ENCODE measurements at regions of chr9 and their contacts with region 1.

Region 1: GRCh38 chr9:95875305-95876137 is at the start of gene ERCC6L2:
- DNase-seq: peak; percentile 87 to 94 (median 90)
- ATAC-seq: peak; percentile 93
- H3K4me3 ChIP-seq: no peak within 1 kb of the TSS
- H3K4me3 Mint-ChIP-seq: no peak within 1 kb of the TSS
- H3K27ac ChIP-seq: no peak within 1 kb of the TSS
- H3K27ac Mint-ChIP-seq: no peak within 1 kb of the TSS
- H3K4me1 ChIP-seq: peaks cover 8 to 20% of the 10 kb centered on the region in 2 donors
- H3K4me1 Mint-ChIP-seq: peaks cover 17 to 44% (median 35%) of the 10 kb centered on the region in 7 donors
- H3K27me3 ChIP-seq: no peaks in the 10 kb centered on the region
- H3K27me3 Mint-ChIP-seq: no peaks in the 10 kb centered on the region
- total RNA-seq, gene ERCC6L2: 46.2 to 82.8 (median 52.4) TPM

Region 2: GRCh38 chr9:94166237-94166963 is 1709.1 kb before region 1 on chr9:
- CTCF ChIA-PET with region 1: no interaction called
- POLR2A ChIA-PET with region 1: no interaction called
- intact Hi-C with region 1: loop called (anchors 5 kb)
- DNase-seq: peak; percentile 81 to 96 (median 92)
- ATAC-seq: peak; percentile 72
- H3K4me3 ChIP-seq: peak overlapping the region; percentile 82
- H3K4me3 Mint-ChIP-seq: peak overlapping the region; percentile 84 to 96 (median 88)
- H3K27ac ChIP-seq: peak overlapping the region; percentile 100
- H3K27ac Mint-ChIP-seq: peak overlapping the region; percentile 79 to 97 (median 91)
- H3K4me1 ChIP-seq: peaks cover 37 to 38% of the 10 kb centered on the region in 2 donors
- H3K4me1 Mint-ChIP-seq: peaks cover 33 to 61% (median 58%) of the 10 kb centered on the region in 7 donors
- H3K27me3 ChIP-seq: no peaks in the 10 kb centered on the region
- H3K27me3 Mint-ChIP-seq: no peaks in the 10 kb centered on the region

Region 3: GRCh38 chr9:95494416-95495371 is 380.8 kb before region 1 on chr9:
- CTCF ChIA-PET with region 1: no interaction called
- POLR2A ChIA-PET with region 1: no interaction called
- intact Hi-C with region 1: loop called in 1 of 2 experiments (anchors 5 kb)
- DNase-seq: peak; percentile 58 to 93 (median 90)
- ATAC-seq: peak; percentile 97
- H3K4me3 ChIP-seq: peak overlapping the region; percentile 67
- H3K4me3 Mint-ChIP-seq: peak overlapping the region; percentile 75 to 94 (median 89)
- H3K27ac ChIP-seq: peak overlapping the region; percentile 63
- H3K27ac Mint-ChIP-seq: peak overlapping the region; percentile 80 to 99 (median 94)
- H3K4me1 ChIP-seq: peaks cover 56 to 59% of the 10 kb centered on the region in 2 donors
- H3K4me1 Mint-ChIP-seq: peaks cover 34 to 81% (median 70%) of the 10 kb centered on the region in 7 donors
- H3K27me3 ChIP-seq: no peaks in the 10 kb centered on the region
- H3K27me3 Mint-ChIP-seq: peaks cover 0 to 42% (median 0%) of the 10 kb centered on the region in 5 donors

Region 4: GRCh38 chr9:95696701-95697100 is 178.8 kb before region 1 on chr9:
- CTCF ChIA-PET with region 1: no interaction called
- POLR2A ChIA-PET with region 1: no interaction called
- intact Hi-C with region 1: no loop called
- DNase-seq: no peak
- ATAC-seq: no peak
- H3K4me3 ChIP-seq: no peak overlapping the region
- H3K4me3 Mint-ChIP-seq: no peak overlapping the region
- H3K27ac ChIP-seq: no peak overlapping the region
- H3K27ac Mint-ChIP-seq: no peak overlapping the region
- H3K4me1 ChIP-seq: no peaks in the 10 kb centered on the region
- H3K4me1 Mint-ChIP-seq: peaks cover 0 to 2% (median 0%) of the 10 kb centered on the region in 7 donors
- H3K27me3 ChIP-seq: no peaks in the 10 kb centered on the region
- H3K27me3 Mint-ChIP-seq: peaks cover 0 to 13% (median 4%) of the 10 kb centered on the region in 5 donors

Region 5: DNA sequence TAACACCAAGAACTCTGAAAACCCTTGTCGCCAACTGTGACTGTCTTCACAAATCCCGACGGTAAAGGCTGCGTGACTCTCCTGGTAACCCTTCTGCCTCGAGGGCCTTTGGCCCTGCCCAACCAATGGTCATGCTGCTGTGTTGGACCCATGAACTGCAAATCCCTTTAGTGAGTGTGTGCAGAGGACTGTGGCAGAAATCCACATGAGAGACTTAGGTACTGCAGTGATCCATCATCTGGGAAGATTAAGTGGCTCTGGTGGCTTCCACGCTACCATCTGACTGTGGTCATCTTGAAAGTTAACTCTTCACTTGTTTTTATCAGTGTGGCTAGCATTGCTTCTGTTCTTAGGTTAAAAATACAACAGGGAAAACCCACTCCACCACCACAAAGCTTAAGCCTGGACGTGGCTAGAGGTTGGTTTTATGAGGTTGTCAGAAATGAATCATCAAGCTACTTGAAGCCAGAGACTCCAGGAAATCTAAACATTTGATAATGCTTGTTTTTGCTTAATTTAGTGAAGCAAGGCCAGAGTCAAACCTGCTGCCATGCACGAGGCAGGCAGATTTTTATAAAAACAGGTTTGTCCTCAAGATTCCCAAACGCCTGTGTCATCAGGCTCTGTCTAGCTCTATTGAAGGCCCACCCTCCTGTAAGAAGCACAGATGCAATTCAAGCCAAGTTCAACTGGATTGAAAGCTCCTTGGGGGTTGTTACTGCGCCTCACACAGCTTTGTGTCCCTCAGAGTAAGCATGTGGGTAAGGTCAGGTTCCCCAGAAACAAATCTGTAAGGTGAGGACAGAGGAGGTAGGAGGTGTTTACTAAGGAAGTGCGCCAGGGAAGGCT is 52.7 kb before region 1 on chr9:
- CTCF ChIA-PET with region 1: no interaction called
- POLR2A ChIA-PET with region 1: no interaction called
- intact Hi-C with region 1: loop called in 1 of 2 experiments (anchors 2 kb)
- DNase-seq: peak in 1 of 9 donors; percentile 45
- ATAC-seq: no peak
- H3K4me3 ChIP-seq: no peak overlapping the region
- H3K4me3 Mint-ChIP-seq: peak overlapping the region in 1 of 10 donors; percentile 65
- H3K27ac ChIP-seq: no peak overlapping the region
- H3K27ac Mint-ChIP-seq: peak overlapping the region in 2 of 9 donors; percentile 6 to 70
- H3K4me1 ChIP-seq: no peaks in the 10 kb centered on the region
- H3K4me1 Mint-ChIP-seq: peaks cover 0 to 41% (median 4%) of the 10 kb centered on the region in 7 donors
- H3K27me3 ChIP-seq: no peaks in the 10 kb centered on the region
- H3K27me3 Mint-ChIP-seq: peaks cover 0 to 47% (median 0%) of the 10 kb centered on the region in 5 donors

Region 6: GRCh38 chr9:95901506-95901905 is 26.0 kb after region 1 on chr9:
- CTCF ChIA-PET with region 1: interaction called, 4 read pairs
- POLR2A ChIA-PET with region 1: interaction called, 10 read pairs
- intact Hi-C with region 1: loop called (anchors 1 to 2 kb)
- DNase-seq: no peak
- ATAC-seq: no peak
- H3K4me3 ChIP-seq: no peak overlapping the region
- H3K4me3 Mint-ChIP-seq: peak overlapping the region in 1 of 10 donors; percentile 16
- H3K27ac ChIP-seq: no peak overlapping the region
- H3K27ac Mint-ChIP-seq: no peak overlapping the region
- H3K4me1 ChIP-seq: peaks cover 0 to 5% of the 10 kb centered on the region in 2 donors
- H3K4me1 Mint-ChIP-seq: peaks cover 20 to 68% (median 42%) of the 10 kb centered on the region in 7 donors
- H3K27me3 ChIP-seq: no peaks in the 10 kb centered on the region
- H3K27me3 Mint-ChIP-seq: no peaks in the 10 kb centered on the region

Region 7: GRCh38 chr9:96020792-96021550 is 145.4 kb after region 1 on chr9:
- CTCF ChIA-PET with region 1: no interaction called
- POLR2A ChIA-PET with region 1: no interaction called
- intact Hi-C with region 1: loop called (anchors 1 kb)
- DNase-seq: peak in 8 of 9 donors; percentile 35 to 70 (median 44)
- ATAC-seq: peak; percentile 70
- H3K4me3 ChIP-seq: peak overlapping the region; percentile 61
- H3K4me3 Mint-ChIP-seq: peak overlapping the region; percentile 71 to 91 (median 86)
- H3K27ac ChIP-seq: peak overlapping the region; percentile 72
- H3K27ac Mint-ChIP-seq: peak overlapping the region; percentile 28 to 97 (median 70)
- H3K4me1 ChIP-seq: peaks cover 27 to 34% of the 10 kb centered on the region in 2 donors
- H3K4me1 Mint-ChIP-seq: peaks cover 47 to 74% (median 63%) of the 10 kb centered on the region in 7 donors
- H3K27me3 ChIP-seq: no peaks in the 10 kb centered on the region
- H3K27me3 Mint-ChIP-seq: peaks cover 0 to 31% (median 5%) of the 10 kb centered on the region in 5 donors

Region 8: DNA sequence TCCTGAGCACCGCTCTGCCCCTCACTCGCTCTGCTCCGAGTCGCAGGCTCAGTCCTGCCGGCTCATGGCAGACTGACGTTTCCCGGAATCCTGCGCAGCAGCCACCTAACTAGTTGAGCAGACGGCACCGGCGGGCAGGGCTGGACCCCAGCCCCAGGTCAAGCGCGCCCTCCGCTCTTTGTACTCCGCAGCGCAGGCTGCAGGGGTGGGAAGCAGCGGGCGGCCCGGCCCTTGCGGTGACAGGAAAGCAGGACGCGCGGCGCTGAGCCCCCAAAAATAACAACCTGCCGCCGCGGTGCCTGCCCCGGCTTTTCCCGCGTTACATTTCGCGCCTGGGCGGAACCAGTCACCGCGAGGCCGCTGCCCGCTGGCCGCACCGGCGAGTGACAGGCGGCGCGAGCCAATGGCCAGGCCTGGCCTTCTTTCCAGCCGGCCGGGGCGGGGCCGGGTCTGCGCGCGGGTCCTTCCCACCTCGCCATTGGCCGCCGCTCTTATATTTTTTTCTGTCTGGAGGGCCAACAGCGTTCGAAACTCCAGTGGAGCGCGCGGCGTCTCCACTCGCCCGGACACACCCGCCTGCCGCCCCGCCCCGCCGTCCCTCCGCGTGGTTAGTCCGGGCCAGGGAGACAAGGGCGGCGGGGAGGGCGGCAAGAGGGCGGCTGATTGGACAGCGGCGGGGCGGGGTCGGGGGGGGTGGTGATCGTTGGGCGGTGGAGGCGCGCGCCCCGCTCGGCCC is 542.7 kb after region 1 on chr9 and contains the start of gene ZNF367:
- CTCF ChIA-PET with region 1: no interaction called
- POLR2A ChIA-PET with region 1: no interaction called
- intact Hi-C with region 1: loop called in 1 of 2 experiments (anchors 1 kb)
- DNase-seq: peak; percentile 75 to 94 (median 82)
- ATAC-seq: peak; percentile 85
- H3K4me3 ChIP-seq: peak within 1 kb of the TSS; percentile 94
- H3K4me3 Mint-ChIP-seq: peak within 1 kb of the TSS; percentile 88 to 98 (median 92)
- H3K27ac ChIP-seq: peak within 1 kb of the TSS; percentile 98
- H3K27ac Mint-ChIP-seq: peak within 1 kb of the TSS; percentile 92 to 98 (median 96)
- H3K4me1 ChIP-seq: peaks cover 19 to 31% of the 10 kb centered on the region in 2 donors
- H3K4me1 Mint-ChIP-seq: peaks cover 21 to 39% (median 31%) of the 10 kb centered on the region in 7 donors
- H3K27me3 ChIP-seq: no peaks in the 10 kb centered on the region
- H3K27me3 Mint-ChIP-seq: no peaks in the 10 kb centered on the region
- total RNA-seq, gene ZNF367: 3.8 to 22.9 (median 5.5) TPM

Measured in naive thymus-derived CD4-positive, alpha-beta T cell (primary cell).